ENCODE measurements at regions of chr17 and their contacts with region 1.

Region 1: DNA sequence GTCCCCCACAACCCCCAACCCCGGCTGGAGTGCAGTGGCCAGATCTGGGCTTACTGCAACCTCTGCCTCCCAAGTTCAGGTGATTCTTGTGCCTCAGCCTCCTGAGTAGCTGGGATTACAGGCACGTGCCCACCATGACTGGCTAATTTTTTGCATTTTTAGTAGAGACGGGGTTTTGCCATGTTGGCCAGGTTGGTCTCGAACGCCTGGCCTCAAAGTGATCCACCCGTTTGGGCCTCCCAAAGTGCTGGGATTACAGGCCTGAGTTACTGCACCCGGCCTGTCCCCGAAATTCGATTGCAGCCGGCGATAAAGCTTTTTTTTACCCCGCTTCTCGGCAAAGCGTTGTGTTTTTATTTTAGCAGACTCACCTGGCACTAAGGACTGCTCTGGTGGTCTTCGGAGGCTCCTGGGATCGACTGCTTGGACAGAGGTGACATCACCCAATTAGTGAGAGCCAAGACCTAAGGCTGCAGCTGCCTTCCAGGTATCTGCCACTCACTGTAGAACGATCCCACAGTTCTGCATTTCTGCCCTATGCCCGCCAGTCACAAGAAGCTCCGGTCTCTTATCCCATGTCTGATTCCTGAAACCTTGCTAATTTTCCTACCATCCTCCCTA is 82.2 kb upstream of the ARL4D start:
- DNase-seq: peak; percentile 31
- ATAC-seq: no peak
- H3K4me3 Mint-ChIP-seq: no peak overlapping the region
- H3K27ac Mint-ChIP-seq: no peak overlapping the region
- H3K4me1 Mint-ChIP-seq: peaks cover 17% of the 10 kb centered on the region
- H3K27me3 Mint-ChIP-seq: no peaks in the 10 kb centered on the region
- CTCF ChIP-seq: no peak

Region 2: GRCh38 chr17:42586514-42587230 is 730.0 kb before region 1 on chr17:
- CTCF ChIA-PET with region 1: no interaction called
- POLR2A ChIA-PET with region 1: no interaction called
- intact Hi-C with region 1: no loop called
- DNase-seq: no peak
- ATAC-seq: peak; percentile 56
- H3K4me3 Mint-ChIP-seq: peak overlapping the region; percentile 73
- H3K27ac Mint-ChIP-seq: peak overlapping the region; percentile 95
- H3K4me1 Mint-ChIP-seq: peaks cover 31% of the 10 kb centered on the region
- H3K27me3 Mint-ChIP-seq: no peaks in the 10 kb centered on the region
- CTCF ChIP-seq: no peak

Region 3: DNA sequence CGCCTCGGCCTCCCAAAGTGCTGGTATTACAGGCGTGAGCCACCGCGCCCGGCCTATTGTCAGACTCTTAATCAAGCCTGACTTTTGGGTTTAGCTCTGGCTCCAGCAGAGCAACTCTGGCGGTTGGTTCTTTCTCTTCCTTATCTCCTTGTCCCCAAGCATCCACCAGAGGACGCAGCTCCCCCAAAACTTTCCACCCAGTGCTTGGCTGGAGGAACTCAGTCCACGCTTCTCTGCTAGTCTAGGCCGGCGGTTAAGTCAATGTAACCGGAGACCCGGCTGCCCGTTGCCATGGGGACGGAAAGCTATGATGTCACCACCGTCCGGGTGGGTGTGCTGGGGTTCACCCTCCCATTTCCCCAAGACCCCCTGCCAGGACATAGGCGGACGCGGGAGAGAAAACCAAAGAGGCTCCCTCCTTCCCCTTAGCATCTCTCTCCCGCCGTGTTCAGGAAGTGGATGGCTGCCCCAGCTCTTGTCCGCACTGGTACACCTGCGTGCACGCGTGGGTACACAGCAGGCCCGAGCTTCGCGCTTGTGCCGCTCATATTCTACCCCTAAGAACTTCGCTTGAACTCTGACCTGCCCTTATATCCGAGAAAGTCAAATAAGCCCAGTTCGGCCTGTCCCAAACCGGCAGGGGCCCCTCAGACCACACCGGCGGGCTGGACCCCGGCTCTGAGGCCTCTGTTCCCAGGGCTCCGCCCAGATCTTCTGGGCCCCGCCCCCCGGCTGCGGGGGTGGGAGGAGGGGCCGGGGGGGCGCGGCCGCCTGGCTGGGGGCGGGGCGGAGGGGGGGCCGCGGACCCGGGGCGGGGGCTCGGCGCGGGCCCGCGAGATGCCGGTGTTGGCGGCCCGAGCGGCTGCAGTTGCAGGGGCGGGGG is 292.0 kb before region 1 on chr17 and contains the start of gene RND2:
- CTCF ChIA-PET with region 1: no interaction called
- POLR2A ChIA-PET with region 1: interaction called, 53 read pairs
- intact Hi-C with region 1: loop called (anchors 1 kb)
- DNase-seq: peak; percentile 79
- ATAC-seq: peak; percentile 65
- H3K4me3 Mint-ChIP-seq: peak within 1 kb of the TSS; percentile 92
- H3K27ac Mint-ChIP-seq: peak within 1 kb of the TSS; percentile 87
- H3K4me1 Mint-ChIP-seq: peaks cover 24% of the 10 kb centered on the region
- H3K27me3 Mint-ChIP-seq: no peaks in the 10 kb centered on the region
- CTCF ChIP-seq: no peak
- total RNA-seq, gene RND2: 0.05 and 0.13 TPM in 2 replicates

Region 4: DNA sequence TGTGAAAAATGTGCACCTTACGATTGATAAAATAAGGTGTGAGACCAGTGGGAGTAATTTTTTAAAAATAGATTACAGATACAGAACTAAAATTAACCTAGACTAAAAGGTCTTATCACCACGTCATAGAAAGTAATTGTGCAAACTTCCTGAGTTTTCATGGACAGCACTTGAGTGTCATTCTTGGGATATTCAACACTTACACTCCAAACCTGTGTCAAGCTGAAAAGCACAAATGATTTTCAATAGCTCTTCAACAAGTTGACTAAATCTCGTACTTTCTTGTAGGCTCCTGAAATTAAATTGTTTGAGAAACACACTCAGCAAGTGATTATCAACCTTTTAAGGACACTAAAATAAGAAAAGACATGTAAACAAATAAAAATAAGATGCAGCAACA is 212.0 kb before region 1 on chr17:
- CTCF ChIA-PET with region 1: no interaction called
- POLR2A ChIA-PET with region 1: no interaction called
- intact Hi-C with region 1: no loop called
- DNase-seq: no peak
- ATAC-seq: no peak
- H3K4me3 Mint-ChIP-seq: no peak overlapping the region
- H3K27ac Mint-ChIP-seq: no peak overlapping the region
- H3K4me1 Mint-ChIP-seq: no peaks in the 10 kb centered on the region
- H3K27me3 Mint-ChIP-seq: no peaks in the 10 kb centered on the region
- CTCF ChIP-seq: no peak

Region 5: GRCh38 chr17:43170766-43171585 is 145.7 kb before region 1 on chr17 and contains the start of gene NBR1:
- CTCF ChIA-PET with region 1: interaction called, 6 read pairs
- POLR2A ChIA-PET with region 1: interaction called, 73 read pairs
- intact Hi-C with region 1: loop called (anchors 1 kb)
- DNase-seq: peak; percentile 86
- ATAC-seq: peak; percentile 74
- H3K4me3 Mint-ChIP-seq: no peak within 1 kb of the TSS
- H3K27ac Mint-ChIP-seq: no peak within 1 kb of the TSS
- H3K4me1 Mint-ChIP-seq: peaks cover 13% of the 10 kb centered on the region
- H3K27me3 Mint-ChIP-seq: no peaks in the 10 kb centered on the region
- CTCF ChIP-seq: no peak
- total RNA-seq, gene NBR1: 42.2 and 44.8 TPM in 2 replicates

Region 6: GRCh38 chr17:43326481-43327275 is 10.0 kb after region 1 on chr17:
- CTCF ChIA-PET with region 1: no interaction called
- POLR2A ChIA-PET with region 1: no interaction called
- intact Hi-C with region 1: no loop called
- DNase-seq: no peak
- ATAC-seq: no peak
- H3K4me3 Mint-ChIP-seq: no peak overlapping the region
- H3K27ac Mint-ChIP-seq: no peak overlapping the region
- H3K4me1 Mint-ChIP-seq: peaks cover 9% of the 10 kb centered on the region
- H3K27me3 Mint-ChIP-seq: no peaks in the 10 kb centered on the region
- CTCF ChIP-seq: no peak

Region 7: GRCh38 chr17:43338886-43339516 is 22.4 kb after region 1 on chr17:
- CTCF ChIA-PET with region 1: no interaction called
- POLR2A ChIA-PET with region 1: interaction called, 14 read pairs
- intact Hi-C with region 1: no loop called
- DNase-seq: peak; percentile 47
- ATAC-seq: no peak
- H3K4me3 Mint-ChIP-seq: no peak overlapping the region
- H3K27ac Mint-ChIP-seq: no peak overlapping the region
- H3K4me1 Mint-ChIP-seq: peaks cover 18% of the 10 kb centered on the region
- H3K27me3 Mint-ChIP-seq: no peaks in the 10 kb centered on the region
- CTCF ChIP-seq: peak; percentile 38

Region 8: DNA sequence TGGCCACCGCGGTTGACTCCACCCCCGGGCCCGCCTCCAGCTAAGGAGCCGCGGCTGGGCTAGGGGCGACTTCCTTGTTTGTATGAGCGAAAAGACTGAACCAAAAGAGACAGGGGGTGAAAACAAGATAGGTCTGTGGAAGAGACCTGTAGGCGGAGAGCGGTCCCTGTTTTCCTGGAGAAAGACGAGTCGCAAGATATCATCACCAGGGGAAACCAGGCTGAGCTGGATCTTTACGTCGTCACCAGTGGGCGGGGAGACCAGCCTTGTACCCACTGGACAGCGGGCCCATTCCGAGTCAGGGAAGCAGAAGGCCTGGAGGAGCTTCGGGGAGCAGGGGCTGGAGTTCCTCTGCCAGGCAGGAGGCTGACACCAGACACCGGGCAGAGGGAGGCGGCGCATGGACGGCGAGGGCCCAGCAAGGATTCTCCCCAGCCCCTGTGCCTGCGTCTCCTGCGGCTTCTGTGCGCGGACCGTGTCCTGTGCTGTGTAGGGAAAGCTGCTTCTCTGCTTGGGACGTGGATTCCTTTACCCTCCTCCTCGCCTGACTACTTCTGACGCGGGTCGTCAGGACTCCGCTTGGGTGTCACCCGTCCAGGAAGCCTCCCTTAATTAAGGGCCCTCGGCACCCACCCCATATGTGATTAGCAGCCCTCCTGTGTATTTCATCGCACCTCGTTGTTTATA is 71.9 kb after region 1 on chr17:
- CTCF ChIA-PET with region 1: no interaction called
- POLR2A ChIA-PET with region 1: interaction called, 29 read pairs
- intact Hi-C with region 1: no loop called
- DNase-seq: peak; percentile 94
- ATAC-seq: peak; percentile 76
- H3K4me3 Mint-ChIP-seq: peak overlapping the region; percentile 88
- H3K27ac Mint-ChIP-seq: peak overlapping the region; percentile 96
- H3K4me1 Mint-ChIP-seq: peaks cover 38% of the 10 kb centered on the region
- H3K27me3 Mint-ChIP-seq: no peaks in the 10 kb centered on the region
- CTCF ChIP-seq: no peak

Region 9: DNA sequence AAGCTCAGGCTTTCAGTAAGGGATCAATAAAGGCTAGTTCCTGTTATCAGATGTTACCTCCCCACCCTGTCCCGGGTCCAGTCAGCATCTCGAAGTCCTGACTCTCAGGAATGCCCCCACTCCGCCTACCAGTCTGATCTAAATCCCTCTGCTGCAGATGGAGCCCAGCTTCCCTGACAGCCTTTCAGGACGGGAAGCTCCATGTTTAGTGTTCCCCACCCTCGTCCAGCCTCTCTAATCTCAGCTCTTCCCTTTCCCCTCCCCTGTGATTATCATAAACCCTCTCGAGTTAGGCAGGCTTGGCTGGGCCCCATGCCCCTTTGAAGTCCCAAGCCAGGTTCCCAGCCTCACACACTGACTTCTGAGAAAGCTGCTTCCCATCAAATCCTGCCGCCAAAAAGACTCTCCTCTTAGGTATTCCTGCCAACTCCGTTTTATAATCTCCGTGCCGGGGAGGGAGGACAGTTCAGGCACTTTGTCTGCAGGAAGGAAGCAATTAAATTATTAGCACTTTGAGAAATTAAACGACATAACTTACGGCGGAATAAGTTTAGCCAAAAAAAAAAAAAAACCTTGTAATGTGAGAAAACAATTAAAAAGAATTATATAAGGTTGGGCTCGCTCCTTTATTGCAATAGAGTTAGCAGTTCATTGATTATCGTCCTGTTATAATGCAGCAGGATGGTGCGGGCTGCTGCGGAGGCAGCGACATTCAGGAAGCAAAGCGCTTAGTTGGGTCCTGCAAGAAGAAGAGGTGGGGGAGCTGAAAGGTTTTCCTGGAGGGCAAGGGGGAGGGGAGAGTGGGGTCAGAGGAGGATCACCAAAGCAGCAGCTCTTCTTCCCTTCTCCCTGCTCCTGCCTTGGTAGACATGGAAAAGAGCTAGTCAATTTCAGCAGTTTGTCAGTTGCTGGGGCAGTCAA is 246.3 kb after region 1 on chr17:
- CTCF ChIA-PET with region 1: no interaction called
- POLR2A ChIA-PET with region 1: interaction called, 14 read pairs
- intact Hi-C with region 1: no loop called
- DNase-seq: no peak
- ATAC-seq: no peak
- H3K4me3 Mint-ChIP-seq: no peak overlapping the region
- H3K27ac Mint-ChIP-seq: no peak overlapping the region
- H3K4me1 Mint-ChIP-seq: no peaks in the 10 kb centered on the region
- H3K27me3 Mint-ChIP-seq: peaks cover 41% of the 10 kb centered on the region
- CTCF ChIP-seq: no peak